HepG2 (cell line): ENCODE measurements at regions of chrX and their contacts with region 1.

Region 1: DNA sequence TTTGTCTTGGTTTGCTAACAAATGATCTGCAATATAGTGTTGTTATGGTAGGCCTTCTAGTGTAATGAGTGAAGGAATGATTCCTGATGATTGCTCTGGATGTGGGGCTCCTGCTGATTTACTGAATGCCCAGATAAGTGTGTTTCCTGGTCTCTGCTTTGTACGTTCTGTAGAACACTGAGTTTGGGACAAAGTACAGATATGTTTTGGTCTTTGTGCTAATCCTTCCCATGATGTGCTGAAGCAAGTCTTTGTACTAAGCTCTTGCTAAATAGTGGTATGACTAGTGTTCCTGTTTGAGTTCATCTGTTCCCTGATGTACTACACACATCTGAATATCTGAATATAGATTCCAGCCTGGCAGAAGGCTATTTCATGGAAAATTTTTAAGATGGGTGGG is 36.9 kb upstream of the XIAP start:
- DNase-seq: peak; percentile 93
- ATAC-seq: peak; percentile 85
- H3K4me3 ChIP-seq: no peak overlapping the region
- H3K27ac ChIP-seq: peak overlapping the region; percentile 98
- H3K4me1 ChIP-seq: peaks cover 63% of the 10 kb centered on the region
- H3K27me3 ChIP-seq: no peaks in the 10 kb centered on the region
- CTCF ChIP-seq: no peak
- EP300 ChIP-seq: peak in 1 of 2 experiments; percentile 81; a peak in 1 of 4 replicates
- POLR2A ChIP-seq: peak in 1 of 2 experiments; percentile 34; a peak in 1 of 4 replicates
- RAD21 ChIP-seq: no peak

Region 2: GRCh38 chrX:123779908-123780396 is 43.0 kb before region 1 on chrX:
- CTCF ChIA-PET with region 1: no interaction called
- POLR2A ChIA-PET with region 1: interaction called, 10 read pairs
- in situ Hi-C with region 1: no loop called
- intact Hi-C with region 1: loop called (anchors 2 kb)
- DNase-seq: peak; percentile 83
- ATAC-seq: peak; percentile 65
- H3K4me3 ChIP-seq: peak overlapping the region in 2 of 3 experiments; percentile 9 to 58; a peak in 1 of 6 replicates
- H3K27ac ChIP-seq: peak overlapping the region; percentile 93
- H3K4me1 ChIP-seq: peaks cover 39% of the 10 kb centered on the region
- H3K27me3 ChIP-seq: no peaks in the 10 kb centered on the region
- CTCF ChIP-seq: no peak
- EP300 ChIP-seq: peak in 1 of 2 experiments; percentile 83; a peak in 2 of 4 replicates
- POLR2A ChIP-seq: no peak
- RAD21 ChIP-seq: no peak

Region 3: GRCh38 chrX:123803331-123803983 is 19.5 kb before region 1 on chrX:
- CTCF ChIA-PET with region 1: no interaction called
- POLR2A ChIA-PET with region 1: interaction called, 27 read pairs
- in situ Hi-C with region 1: no loop called
- intact Hi-C with region 1: loop called (anchors 1 kb)
- DNase-seq: peak; percentile 97
- ATAC-seq: peak; percentile 97
- H3K4me3 ChIP-seq: no peak overlapping the region
- H3K27ac ChIP-seq: peak overlapping the region; percentile 80
- H3K4me1 ChIP-seq: peaks cover 51% of the 10 kb centered on the region
- H3K27me3 ChIP-seq: no peaks in the 10 kb centered on the region
- CTCF ChIP-seq: no peak
- EP300 ChIP-seq: peak; percentile 25 to 90; a peak in 3 of 4 replicates
- POLR2A ChIP-seq: no peak
- RAD21 ChIP-seq: no peak

Region 4: GRCh38 chrX:123993326-123993725 is 170.4 kb after region 1 on chrX:
- CTCF ChIA-PET with region 1: no interaction called
- POLR2A ChIA-PET with region 1: no interaction called
- in situ Hi-C with region 1: no loop called
- intact Hi-C with region 1: no loop called
- DNase-seq: no peak
- ATAC-seq: no peak
- H3K4me3 ChIP-seq: no peak overlapping the region
- H3K27ac ChIP-seq: no peak overlapping the region
- H3K4me1 ChIP-seq: no peaks in the 10 kb centered on the region
- H3K27me3 ChIP-seq: no peaks in the 10 kb centered on the region
- CTCF ChIP-seq: no peak
- EP300 ChIP-seq: no peak
- POLR2A ChIP-seq: no peak
- RAD21 ChIP-seq: no peak